ENCODE measurements at regions of chr3 and their contacts with region 1.

Region 1: DNA sequence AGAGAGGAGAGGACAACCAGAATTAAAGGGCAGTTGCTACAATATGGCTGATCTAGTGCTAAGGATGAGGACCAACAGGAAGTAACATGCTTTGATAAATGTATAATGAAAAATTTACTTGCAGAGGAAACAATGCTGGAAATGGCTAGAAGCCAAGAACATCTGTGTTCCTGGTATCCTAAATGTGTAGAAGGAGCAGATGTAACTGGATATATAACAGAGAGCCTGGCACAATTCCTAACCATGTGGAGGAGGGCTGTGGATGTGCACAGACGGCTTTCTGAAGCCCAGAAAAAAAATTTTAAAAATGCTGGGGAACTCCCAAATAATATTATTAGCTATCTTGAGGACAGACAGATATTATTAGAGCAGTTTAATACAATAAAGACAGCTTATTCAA is 159.4 kb upstream of the GBE1 start:
- DNase-seq: no peak
- H3K4me3 Mint-ChIP-seq: no peak overlapping the region
- H3K27ac Mint-ChIP-seq: no peak overlapping the region
- H3K4me1 Mint-ChIP-seq: no peaks in the 10 kb centered on the region
- H3K27me3 Mint-ChIP-seq: no peaks in the 10 kb centered on the region

Region 2: GRCh38 chr3:81891055-81891895 is 29.5 kb before region 1 on chr3:
- CTCF ChIA-PET with region 1: no interaction called
- POLR2A ChIA-PET with region 1: no interaction called
- DNase-seq: no peak
- H3K4me3 Mint-ChIP-seq: no peak overlapping the region
- H3K27ac Mint-ChIP-seq: no peak overlapping the region
- H3K4me1 Mint-ChIP-seq: no peaks in the 10 kb centered on the region
- H3K27me3 Mint-ChIP-seq: no peaks in the 10 kb centered on the region

Region 3: GRCh38 chr3:81910244-81910852 is 10.5 kb before region 1 on chr3:
- CTCF ChIA-PET with region 1: interaction called, 10 read pairs
- POLR2A ChIA-PET with region 1: no interaction called
- DNase-seq: no peak
- H3K4me3 Mint-ChIP-seq: no peak overlapping the region
- H3K27ac Mint-ChIP-seq: no peak overlapping the region
- H3K4me1 Mint-ChIP-seq: no peaks in the 10 kb centered on the region
- H3K27me3 Mint-ChIP-seq: no peaks in the 10 kb centered on the region

Region 4: GRCh38 chr3:81936817-81937216 is 16.0 kb after region 1 on chr3:
- CTCF ChIA-PET with region 1: no interaction called
- POLR2A ChIA-PET with region 1: no interaction called
- DNase-seq: no peak
- H3K4me3 Mint-ChIP-seq: no peak overlapping the region
- H3K27ac Mint-ChIP-seq: no peak overlapping the region
- H3K4me1 Mint-ChIP-seq: no peaks in the 10 kb centered on the region
- H3K27me3 Mint-ChIP-seq: peaks cover 2% of the 10 kb centered on the region

Region 5: GRCh38 chr3:82030916-82031315 is 110.1 kb after region 1 on chr3:
- CTCF ChIA-PET with region 1: no interaction called
- POLR2A ChIA-PET with region 1: no interaction called
- DNase-seq: no peak
- H3K4me3 Mint-ChIP-seq: no peak overlapping the region
- H3K27ac Mint-ChIP-seq: no peak overlapping the region
- H3K4me1 Mint-ChIP-seq: no peaks in the 10 kb centered on the region
- H3K27me3 Mint-ChIP-seq: no peaks in the 10 kb centered on the region